Activated CD4-positive, alpha-beta T cell treated with anti-CD3 and anti-CD28 coated beads, Interleukin-2, amount 10 ng/mL, durations not matched to agents 24 days and 14 days (primary cell): ENCODE measurements at regions of chr2 and their contacts with region 1.

Region 1: GRCh38 chr2:70124983-70125480 is 37.8 kb downstream of the PCBP1 start:
- DNase-seq: peak; percentile 89
- H3K4me3 Mint-ChIP-seq: peak overlapping the region; percentile 94
- H3K27ac Mint-ChIP-seq: peak overlapping the region; percentile 100
- H3K4me1 Mint-ChIP-seq: peaks cover 63% of the 10 kb centered on the region
- H3K27me3 Mint-ChIP-seq: no peaks in the 10 kb centered on the region

Region 2: GRCh38 chr2:70094978-70095719 is 29.9 kb before region 1 on chr2:
- intact Hi-C with region 1: loop called (anchors 1 kb)
- DNase-seq: peak; percentile 86
- H3K4me3 Mint-ChIP-seq: peak overlapping the region; percentile 88
- H3K27ac Mint-ChIP-seq: peak overlapping the region; percentile 96
- H3K4me1 Mint-ChIP-seq: peaks cover 45% of the 10 kb centered on the region
- H3K27me3 Mint-ChIP-seq: no peaks in the 10 kb centered on the region

Region 3: DNA sequence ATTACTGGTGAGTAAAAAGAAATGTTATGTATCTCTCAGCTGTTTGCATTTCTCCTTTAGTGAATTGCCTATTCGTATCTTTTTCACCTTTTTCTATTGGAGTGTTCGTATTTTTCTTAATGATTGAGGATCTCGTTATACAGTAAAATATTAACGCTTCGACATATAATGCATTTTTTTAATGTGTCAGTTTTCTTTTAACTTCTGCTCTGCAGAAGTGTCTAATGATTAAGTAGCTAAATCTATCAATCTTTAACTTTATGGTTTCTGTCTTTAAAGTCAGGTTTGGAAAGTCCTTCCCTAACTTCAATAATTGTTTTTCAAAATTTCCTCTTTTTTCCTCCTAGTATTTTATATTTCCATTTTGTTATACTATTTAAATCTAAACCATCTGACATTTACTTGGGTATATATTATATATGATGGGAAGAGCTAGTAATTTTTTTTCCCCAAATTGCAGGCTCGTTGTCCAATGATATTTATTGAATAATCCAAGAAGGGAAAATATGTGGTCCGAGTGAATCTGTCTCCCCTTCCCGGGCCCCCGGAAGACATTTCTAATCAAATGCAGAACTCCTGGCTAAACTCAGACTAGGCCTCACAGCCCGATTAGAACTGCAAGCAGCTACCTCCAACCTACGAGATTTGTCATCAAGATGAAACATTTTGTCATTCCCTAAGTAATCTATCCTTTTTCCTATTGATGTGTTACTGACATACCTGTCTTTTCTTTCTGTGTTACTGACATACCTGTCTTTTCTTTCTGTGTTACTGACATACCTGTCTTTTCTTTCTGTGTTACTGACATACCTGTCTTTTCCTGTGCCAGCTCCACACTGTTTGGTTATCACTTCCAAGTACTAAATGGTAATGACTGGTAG is 20.6 kb before region 1 on chr2:
- intact Hi-C with region 1: loop called (anchors 1 kb)
- DNase-seq: peak; percentile 80
- H3K4me3 Mint-ChIP-seq: peak overlapping the region; percentile 72
- H3K27ac Mint-ChIP-seq: peak overlapping the region; percentile 89
- H3K4me1 Mint-ChIP-seq: peaks cover 48% of the 10 kb centered on the region
- H3K27me3 Mint-ChIP-seq: no peaks in the 10 kb centered on the region

Region 4: DNA sequence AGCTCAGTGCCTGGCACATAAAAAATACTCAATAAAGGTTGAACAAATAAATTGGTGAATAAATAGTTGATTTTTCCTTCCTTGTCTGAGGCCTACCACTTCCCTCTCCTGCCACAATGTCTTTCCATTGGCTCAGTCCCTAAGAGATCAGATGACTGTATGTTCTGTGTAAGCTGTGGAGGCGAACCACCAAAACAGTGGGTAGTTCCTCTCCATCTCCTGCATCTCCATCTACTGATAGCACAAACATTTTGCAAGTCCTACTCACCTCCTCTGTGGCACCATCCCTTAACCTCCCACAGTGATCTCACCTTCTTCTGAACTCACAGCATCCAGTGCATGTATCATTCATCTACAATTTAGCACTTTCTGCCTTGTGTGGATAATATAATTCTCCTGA is 12.5 kb after region 1 on chr2:
- intact Hi-C with region 1: loop called (anchors 1 kb)
- DNase-seq: peak; percentile 80
- H3K4me3 Mint-ChIP-seq: peak overlapping the region; percentile 62
- H3K27ac Mint-ChIP-seq: peak overlapping the region; percentile 87
- H3K4me1 Mint-ChIP-seq: peaks cover 67% of the 10 kb centered on the region
- H3K27me3 Mint-ChIP-seq: no peaks in the 10 kb centered on the region

Region 5: GRCh38 chr2:70199326-70199864 is 74.4 kb after region 1 on chr2:
- intact Hi-C with region 1: no loop called
- DNase-seq: no peak
- H3K4me3 Mint-ChIP-seq: no peak overlapping the region
- H3K27ac Mint-ChIP-seq: no peak overlapping the region
- H3K4me1 Mint-ChIP-seq: no peaks in the 10 kb centered on the region
- H3K27me3 Mint-ChIP-seq: no peaks in the 10 kb centered on the region